ENCODE measurements at regions of chr2 and their contacts with region 1.

Region 1: GRCh38 chr2:236512902-236513435 is 56.7 kb upstream of the ACKR3 start:
- DNase-seq: peak; percentile 74
- ATAC-seq: peak; percentile 99
- H3K4me3 Mint-ChIP-seq: no peak overlapping the region
- H3K27ac Mint-ChIP-seq: no peak overlapping the region
- H3K4me1 Mint-ChIP-seq: peaks cover 11% of the 10 kb centered on the region
- H3K27me3 Mint-ChIP-seq: peaks cover 8% of the 10 kb centered on the region
- CTCF ChIP-seq: peak; percentile 76

Region 2: GRCh38 chr2:236343400-236344161 is 169.4 kb before region 1 on chr2:
- CTCF ChIA-PET with region 1: interaction called, 11 read pairs
- POLR2A ChIA-PET with region 1: no interaction called
- DNase-seq: peak; percentile 72
- ATAC-seq: no peak; the same call in 1 of the 2 replicates
- H3K4me3 Mint-ChIP-seq: no peak overlapping the region
- H3K27ac Mint-ChIP-seq: no peak overlapping the region
- H3K4me1 Mint-ChIP-seq: peaks cover 39% of the 10 kb centered on the region
- H3K27me3 Mint-ChIP-seq: no peaks in the 10 kb centered on the region
- CTCF ChIP-seq: peak; percentile 84

Region 3: GRCh38 chr2:236562434-236562833 is 49.5 kb after region 1 on chr2:
- CTCF ChIA-PET with region 1: interaction called, 17 read pairs
- POLR2A ChIA-PET with region 1: no interaction called
- DNase-seq: peak; percentile 34
- ATAC-seq: peak; percentile 28; the same call in 1 of the 2 replicates
- H3K4me3 Mint-ChIP-seq: no peak overlapping the region
- H3K27ac Mint-ChIP-seq: no peak overlapping the region
- H3K4me1 Mint-ChIP-seq: peaks cover 30% of the 10 kb centered on the region
- H3K27me3 Mint-ChIP-seq: peaks cover 25% of the 10 kb centered on the region
- CTCF ChIP-seq: peak; percentile 75

Region 4: GRCh38 chr2:236569573-236569973 is 56.6 kb after region 1 on chr2 and contains the start of gene ACKR3:
- CTCF ChIA-PET with region 1: interaction called, 32 read pairs
- POLR2A ChIA-PET with region 1: interaction called, 4 read pairs
- DNase-seq: peak; percentile 77
- ATAC-seq: peak; percentile 84
- H3K4me3 Mint-ChIP-seq: peak within 1 kb of the TSS; percentile 72
- H3K27ac Mint-ChIP-seq: peak within 1 kb of the TSS; percentile 68
- H3K4me1 Mint-ChIP-seq: peaks cover 79% of the 10 kb centered on the region
- H3K27me3 Mint-ChIP-seq: peaks cover 46% of the 10 kb centered on the region
- CTCF ChIP-seq: no peak
- total RNA-seq, gene ACKR3: 0.94 to 1.4 TPM (median 1.3 TPM) in 3 replicates

Region 5: GRCh38 chr2:237026981-237027711 is 514.2 kb after region 1 on chr2:
- CTCF ChIA-PET with region 1: interaction called, 20 read pairs
- POLR2A ChIA-PET with region 1: no interaction called
- DNase-seq: peak; percentile 73
- ATAC-seq: peak; percentile 95
- H3K4me3 Mint-ChIP-seq: no peak overlapping the region
- H3K27ac Mint-ChIP-seq: no peak overlapping the region
- H3K4me1 Mint-ChIP-seq: no peaks in the 10 kb centered on the region
- H3K27me3 Mint-ChIP-seq: no peaks in the 10 kb centered on the region
- CTCF ChIP-seq: peak; percentile 77

Region 6: GRCh38 chr2:237060534-237061312 is 547.8 kb after region 1 on chr2:
- CTCF ChIA-PET with region 1: interaction called, 19 read pairs
- POLR2A ChIA-PET with region 1: no interaction called
- DNase-seq: peak; percentile 61
- ATAC-seq: peak; percentile 85
- H3K4me3 Mint-ChIP-seq: no peak overlapping the region
- H3K27ac Mint-ChIP-seq: no peak overlapping the region
- H3K4me1 Mint-ChIP-seq: peaks cover 12% of the 10 kb centered on the region
- H3K27me3 Mint-ChIP-seq: no peaks in the 10 kb centered on the region
- CTCF ChIP-seq: 0 out of 2 replicates have a peak, but pooled peaks have one; percentile 29